ENCODE measurements at regions of chr11 and their contacts with region 1.

Region 1: GRCh38 chr11:47642099-47642855 is at the start of gene MTCH2:
- DNase-seq: peak; percentile 97
- ATAC-seq: peak; percentile 98
- total RNA-seq, gene MTCH2: 107 TPM

Region 2: GRCh38 chr11:47858169-47858543 is 215.9 kb after region 1 on chr11:
- intact Hi-C with region 1: loop called (anchors 10 kb)
- DNase-seq: no peak
- ATAC-seq: peak; percentile 33

Measured in left ventricle myocardium superior (tissue), 1 donor.